SK-N-SH (cell line): ENCODE measurements at regions of chr1 and their contacts with region 1.

Region 1: DNA sequence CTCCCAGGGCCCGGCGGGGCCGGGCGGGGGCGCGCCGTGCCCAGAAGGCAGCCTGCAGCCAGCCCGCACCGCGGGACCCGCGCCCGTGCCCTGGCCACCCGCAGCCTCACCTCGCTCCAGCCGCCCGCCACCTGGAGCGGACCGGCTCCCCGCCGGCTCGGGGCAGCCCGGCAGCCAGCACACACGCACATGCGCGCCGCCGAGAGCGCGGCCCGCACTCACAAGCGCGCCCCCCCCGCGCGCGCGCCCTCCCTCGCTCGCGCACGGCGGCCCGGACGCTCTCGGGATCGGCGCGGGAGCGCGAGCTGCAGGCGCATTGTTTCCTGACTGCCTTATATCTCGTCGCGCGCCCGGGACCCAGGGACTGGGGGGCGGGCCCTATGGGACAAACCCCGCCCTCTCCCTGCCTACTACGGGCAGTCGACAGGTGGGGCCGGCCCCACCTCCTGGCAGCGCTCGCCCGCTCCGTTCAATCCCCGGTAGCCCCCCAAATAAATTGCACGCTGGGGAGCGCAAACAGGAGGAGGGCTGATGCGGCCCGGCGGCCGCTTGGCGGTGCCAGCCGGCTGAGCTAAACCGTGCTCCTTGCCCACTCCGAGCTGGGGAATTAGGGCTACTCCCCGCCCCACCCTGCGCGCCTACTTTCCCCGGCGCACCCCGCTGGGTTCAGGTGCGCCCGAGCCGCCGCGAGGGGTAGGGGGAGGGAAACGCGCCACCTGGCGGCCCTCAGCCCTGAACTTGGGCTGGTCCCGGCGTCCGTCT is at the start of gene MYCL:
- DNase-seq: peak; percentile 93
- H3K4me3 ChIP-seq: peak within 1 kb of the TSS; percentile 71 to 81
- H3K27ac ChIP-seq: peak within 1 kb of the TSS in 1 of 2 experiments; percentile 18; a peak in 1 of 4 replicates
- H3K4me1 ChIP-seq: peaks cover 0 to 24% of the 10 kb centered on the region in 2 experiments; a peak in 1 of 4 replicates
- H3K27me3 ChIP-seq: peaks cover 24% of the 10 kb centered on the region; the same call in 1 of the 2 replicates
- CTCF ChIP-seq: peak; percentile 71
- EP300 ChIP-seq: no peak
- RAD21 ChIP-seq: peak; percentile 56
- polyA plus RNA-seq, gene MYCL: 0.48 and 0.57 TPM in 2 replicates

Region 2: GRCh38 chr1:39808784-39809517 is 92.9 kb before region 1 on chr1:
- CTCF ChIA-PET with region 1: interaction called, 20 read pairs
- POLR2A ChIA-PET with region 1: no interaction called
- DNase-seq: no peak
- H3K4me3 ChIP-seq: no peak overlapping the region
- H3K27ac ChIP-seq: no peak overlapping the region
- H3K4me1 ChIP-seq: no peaks in the 10 kb centered on the region
- H3K27me3 ChIP-seq: peaks cover 8% of the 10 kb centered on the region; the same call in 1 of the 2 replicates
- CTCF ChIP-seq: no peak
- EP300 ChIP-seq: no peak
- RAD21 ChIP-seq: no peak

Region 3: DNA sequence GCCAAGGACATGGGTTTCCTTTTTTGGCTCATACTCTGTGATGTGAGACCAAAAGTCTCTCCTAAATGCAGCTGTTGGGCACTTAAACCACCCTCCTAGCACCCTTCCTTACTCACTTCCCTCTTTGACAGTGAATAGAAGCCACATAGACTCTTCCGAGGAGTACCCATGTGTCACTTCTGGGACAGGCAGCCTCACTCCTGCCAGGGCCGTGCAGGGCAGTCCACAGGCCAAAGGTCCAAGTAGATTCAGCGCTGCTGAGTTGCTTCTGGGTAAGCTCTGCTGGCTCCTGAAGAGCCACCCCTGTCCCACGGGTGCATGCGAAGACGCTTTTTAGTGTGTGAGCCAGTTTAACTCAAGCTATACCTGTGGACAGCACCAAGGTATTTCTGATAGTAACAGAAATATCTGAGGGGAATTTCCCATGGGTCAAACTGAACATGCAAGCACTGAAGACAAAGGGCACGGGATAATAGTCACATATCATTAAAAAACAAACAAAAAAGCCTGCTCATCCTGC is 76.4 kb before region 1 on chr1:
- CTCF ChIA-PET with region 1: interaction called, 126 read pairs
- POLR2A ChIA-PET with region 1: no interaction called
- DNase-seq: no peak
- H3K4me3 ChIP-seq: no peak overlapping the region
- H3K27ac ChIP-seq: no peak overlapping the region
- H3K4me1 ChIP-seq: peaks cover 8% of the 10 kb centered on the region in 2 experiments; a peak in 2 of 4 replicates
- H3K27me3 ChIP-seq: no peaks in the 10 kb centered on the region
- CTCF ChIP-seq: no peak
- EP300 ChIP-seq: no peak
- RAD21 ChIP-seq: no peak

Region 4: GRCh38 chr1:39845275-39846116 is 56.4 kb before region 1 on chr1:
- CTCF ChIA-PET with region 1: interaction called, 19 read pairs
- POLR2A ChIA-PET with region 1: no interaction called
- DNase-seq: peak; percentile 84
- H3K4me3 ChIP-seq: no peak overlapping the region
- H3K27ac ChIP-seq: peak overlapping the region; percentile 59 to 76; a peak in 3 of 4 replicates
- H3K4me1 ChIP-seq: peaks cover 13 to 18% of the 10 kb centered on the region in 2 experiments
- H3K27me3 ChIP-seq: no peaks in the 10 kb centered on the region
- CTCF ChIP-seq: no peak
- EP300 ChIP-seq: no peak
- RAD21 ChIP-seq: peak; percentile 26

Region 5: GRCh38 chr1:39877980-39878956 is 23.6 kb before region 1 on chr1:
- CTCF ChIA-PET with region 1: interaction called, 42 read pairs
- POLR2A ChIA-PET with region 1: interaction called, 6 read pairs
- DNase-seq: no peak
- H3K4me3 ChIP-seq: no peak overlapping the region
- H3K27ac ChIP-seq: no peak overlapping the region
- H3K4me1 ChIP-seq: peaks cover 10 to 12% of the 10 kb centered on the region in 2 experiments; a peak in 3 of 4 replicates
- H3K27me3 ChIP-seq: no peaks in the 10 kb centered on the region
- CTCF ChIP-seq: no peak
- EP300 ChIP-seq: no peak
- RAD21 ChIP-seq: no peak

Region 6: DNA sequence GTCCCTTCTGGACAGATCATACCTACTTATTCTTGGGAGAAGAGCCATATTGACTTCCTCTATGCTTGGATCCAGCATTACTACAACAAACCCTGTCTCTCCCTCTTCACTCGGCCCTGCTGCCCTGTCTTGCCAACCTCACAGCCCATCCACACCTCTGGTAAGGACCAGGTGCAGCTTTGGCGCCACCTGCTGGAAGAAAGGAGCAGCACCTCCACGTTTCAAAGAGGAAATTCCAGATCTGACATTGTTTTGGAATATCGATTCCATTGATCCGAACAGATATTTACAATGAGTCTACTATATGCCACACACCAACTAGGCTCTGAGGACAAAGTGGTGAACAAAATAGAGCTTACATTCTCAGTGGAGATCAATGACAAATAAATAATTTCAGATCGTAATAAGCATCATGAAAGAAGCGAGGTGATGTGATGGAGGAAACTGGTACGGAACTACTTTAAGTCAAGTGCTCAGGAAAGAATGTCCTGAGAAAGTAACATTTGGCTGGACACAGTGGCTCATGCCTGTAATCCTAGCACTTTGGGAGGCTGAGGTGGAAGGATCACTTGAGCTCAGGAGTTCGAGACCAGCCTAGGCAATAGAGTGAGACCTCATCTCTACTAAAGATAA is 71.7 kb after region 1 on chr1:
- CTCF ChIA-PET with region 1: interaction called, 37 read pairs
- POLR2A ChIA-PET with region 1: no interaction called
- DNase-seq: peak; percentile 86
- H3K4me3 ChIP-seq: peak overlapping the region in 1 of 2 experiments; percentile 35; a peak in 1 of 4 replicates
- H3K27ac ChIP-seq: no peak overlapping the region
- H3K4me1 ChIP-seq: no peaks in the 10 kb centered on the region; a peak in 1 of 4 replicates
- H3K27me3 ChIP-seq: no peaks in the 10 kb centered on the region
- CTCF ChIP-seq: peak; percentile 98
- EP300 ChIP-seq: no peak
- RAD21 ChIP-seq: peak; percentile 99